Breast epithelium (tissue), 4 donors: ENCODE measurements at regions of chr6 and their contacts with region 1.

Region 1: GRCh38 chr6:30814136-30815040 is 69.9 kb upstream of the DDR1 start:
- DNase-seq: no peak
- H3K4me3 ChIP-seq: no peak overlapping the region
- H3K27ac ChIP-seq: no peak overlapping the region
- H3K4me1 ChIP-seq: peaks cover 0 to 5% of the 10 kb centered on the region in 2 donors
- H3K27me3 ChIP-seq: no peaks in the 10 kb centered on the region
- CTCF ChIP-seq: no peak
- POLR2A ChIP-seq: no peak

Region 2: GRCh38 chr6:30769088-30769852 is 45.1 kb before region 1 on chr6:
- intact Hi-C with region 1: loop called (anchors 10 kb)
- DNase-seq: peak in 1 of 2 donors; percentile 85
- H3K4me3 ChIP-seq: peak overlapping the region in 1 of 3 donors; percentile 39
- H3K27ac ChIP-seq: peak overlapping the region; percentile 91 to 93
- H3K4me1 ChIP-seq: peaks cover 5 to 7% of the 10 kb centered on the region in 2 donors
- H3K27me3 ChIP-seq: no peaks in the 10 kb centered on the region
- CTCF ChIP-seq: no peak
- POLR2A ChIP-seq: no peak